Cardiac septum (tissue), 1 donor: ENCODE measurements at regions of chr4 and their contacts with region 1.

Region 1: DNA sequence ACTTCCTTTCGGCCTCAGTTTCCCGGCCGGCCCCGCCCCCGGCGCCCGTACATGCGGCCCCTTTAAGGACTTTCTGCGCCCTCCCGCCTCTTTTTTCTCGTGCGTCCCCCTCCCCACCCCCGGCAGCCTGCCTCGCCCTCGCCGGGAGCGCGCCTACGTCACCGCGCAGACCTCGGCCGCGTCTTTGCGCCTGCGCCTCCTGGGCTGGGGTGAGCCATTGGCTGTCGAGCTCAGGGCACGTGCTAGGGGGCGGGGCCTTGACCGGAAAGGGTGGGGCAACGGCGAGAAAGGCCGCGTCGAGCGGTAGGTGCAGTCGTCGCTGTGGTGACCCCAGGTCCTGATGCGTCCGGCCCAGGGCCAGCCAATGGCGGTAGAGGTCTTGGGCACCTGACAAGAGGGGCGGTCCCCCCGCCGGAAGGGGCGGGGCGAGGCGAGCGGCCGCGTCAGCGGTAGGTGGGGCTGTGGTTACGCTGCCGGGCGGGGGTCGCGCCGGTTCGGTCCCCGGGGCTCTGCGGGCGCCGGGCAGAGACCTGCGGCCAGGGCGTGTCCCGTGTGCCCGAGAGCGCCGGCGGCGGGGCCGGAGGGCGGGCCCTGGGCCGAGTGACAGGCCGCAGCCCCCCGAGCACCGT is at the start of gene UVSSA:
- DNase-seq: peak; percentile 100
- total RNA-seq, gene UVSSA: 10.4 TPM

Region 2: DNA sequence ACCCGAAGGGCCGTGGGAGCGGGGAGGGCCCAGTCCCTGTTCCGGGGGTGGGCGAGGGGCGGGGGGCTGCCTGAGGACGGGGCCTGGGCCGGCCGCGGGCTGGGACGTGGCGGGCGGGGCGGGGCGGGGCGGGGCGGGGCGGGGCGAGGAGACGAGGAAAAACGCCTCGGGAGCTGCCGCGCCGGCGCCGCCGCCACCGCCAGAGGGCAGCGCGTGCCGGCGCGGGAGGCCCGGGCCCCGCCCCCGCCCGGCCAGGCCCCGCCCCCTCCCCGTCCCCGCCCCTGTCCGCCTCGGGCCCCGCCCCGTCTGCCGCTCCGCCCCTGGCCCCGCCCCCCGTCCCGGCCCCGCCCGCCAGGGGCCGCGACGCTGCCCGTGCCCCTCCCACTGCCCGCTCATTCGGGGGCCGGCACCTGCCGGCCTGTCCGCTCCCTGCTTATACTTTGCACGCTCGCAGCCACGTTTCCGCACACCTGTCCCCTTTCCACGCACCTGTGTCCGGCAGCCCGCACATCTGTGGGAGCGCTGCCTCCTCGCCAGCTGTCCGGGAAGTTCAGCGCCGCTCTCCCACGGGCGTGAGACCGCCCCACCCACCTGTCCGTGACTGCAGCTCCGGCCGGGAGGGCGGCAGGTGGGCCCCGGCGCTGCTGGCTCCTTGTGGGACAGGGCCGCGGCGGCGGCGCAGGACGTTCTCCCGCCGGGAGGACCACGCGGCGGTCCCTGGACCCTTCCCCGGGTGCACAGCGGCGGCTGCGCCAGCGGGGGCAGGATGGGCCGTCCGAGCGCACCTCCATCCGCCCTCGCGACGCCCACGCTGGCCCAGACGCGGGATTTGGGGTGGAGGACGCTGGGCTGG is 337.1 kb before region 1 on chr4:
- intact Hi-C with region 1: loop called (anchors 5 kb)
- DNase-seq: peak; percentile 87

Region 3: GRCh38 chr4:1249148-1249730 is 97.7 kb before region 1 on chr4:
- intact Hi-C with region 1: loop called (anchors 1 kb)
- DNase-seq: peak; percentile 92

Region 4: DNA sequence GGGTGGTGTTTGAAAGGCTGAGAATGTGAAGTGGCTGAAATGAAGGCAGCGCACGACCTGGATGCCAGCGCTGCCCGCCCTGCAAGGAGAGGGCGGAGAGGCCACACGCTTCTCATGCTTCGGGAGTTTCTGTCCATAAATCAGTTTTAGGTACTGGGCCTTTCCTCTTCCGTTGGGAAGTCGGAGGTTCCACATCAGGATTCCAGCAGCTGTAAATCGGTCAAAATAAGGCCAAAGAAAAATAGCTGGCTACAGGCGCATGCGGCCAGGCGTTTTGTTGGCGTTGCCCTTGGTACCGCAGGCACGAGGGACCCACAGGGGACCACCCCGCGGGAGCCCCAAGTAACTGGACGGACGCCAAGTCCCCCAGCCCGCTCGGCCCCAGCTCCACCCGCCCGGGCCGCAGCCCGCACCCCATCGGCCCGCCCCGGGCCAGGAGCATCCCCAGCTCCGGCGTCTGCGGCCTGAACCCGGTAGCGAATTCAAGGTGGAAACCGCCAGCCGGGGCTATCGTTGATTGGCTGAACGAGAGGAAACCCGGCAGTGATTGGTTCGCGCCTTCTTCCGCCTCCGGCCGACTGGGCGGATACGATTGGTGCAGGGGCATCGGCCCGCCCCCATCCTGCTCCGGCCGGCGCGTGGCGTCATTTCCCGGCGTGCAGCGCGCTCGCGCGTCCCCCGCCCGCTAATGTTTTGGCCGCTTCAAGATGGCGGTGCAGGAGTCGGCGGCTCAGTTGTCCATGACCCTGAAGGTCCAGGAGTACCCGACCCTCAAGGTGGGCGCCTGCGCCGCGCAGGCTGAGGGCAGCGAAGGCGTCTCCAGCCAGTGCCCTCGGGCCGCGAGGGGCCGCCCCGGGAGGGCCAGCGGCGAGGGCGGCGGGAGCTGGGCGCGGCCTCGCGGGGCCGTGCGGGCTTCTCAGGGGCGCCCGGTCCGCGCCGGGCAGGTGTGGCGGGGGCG is 57.4 kb before region 1 on chr4 and contains the start of gene MAEA:
- intact Hi-C with region 1: loop called (anchors 2 kb)
- DNase-seq: peak; percentile 99
- total RNA-seq, gene MAEA: 55.2 TPM

Region 5: DNA sequence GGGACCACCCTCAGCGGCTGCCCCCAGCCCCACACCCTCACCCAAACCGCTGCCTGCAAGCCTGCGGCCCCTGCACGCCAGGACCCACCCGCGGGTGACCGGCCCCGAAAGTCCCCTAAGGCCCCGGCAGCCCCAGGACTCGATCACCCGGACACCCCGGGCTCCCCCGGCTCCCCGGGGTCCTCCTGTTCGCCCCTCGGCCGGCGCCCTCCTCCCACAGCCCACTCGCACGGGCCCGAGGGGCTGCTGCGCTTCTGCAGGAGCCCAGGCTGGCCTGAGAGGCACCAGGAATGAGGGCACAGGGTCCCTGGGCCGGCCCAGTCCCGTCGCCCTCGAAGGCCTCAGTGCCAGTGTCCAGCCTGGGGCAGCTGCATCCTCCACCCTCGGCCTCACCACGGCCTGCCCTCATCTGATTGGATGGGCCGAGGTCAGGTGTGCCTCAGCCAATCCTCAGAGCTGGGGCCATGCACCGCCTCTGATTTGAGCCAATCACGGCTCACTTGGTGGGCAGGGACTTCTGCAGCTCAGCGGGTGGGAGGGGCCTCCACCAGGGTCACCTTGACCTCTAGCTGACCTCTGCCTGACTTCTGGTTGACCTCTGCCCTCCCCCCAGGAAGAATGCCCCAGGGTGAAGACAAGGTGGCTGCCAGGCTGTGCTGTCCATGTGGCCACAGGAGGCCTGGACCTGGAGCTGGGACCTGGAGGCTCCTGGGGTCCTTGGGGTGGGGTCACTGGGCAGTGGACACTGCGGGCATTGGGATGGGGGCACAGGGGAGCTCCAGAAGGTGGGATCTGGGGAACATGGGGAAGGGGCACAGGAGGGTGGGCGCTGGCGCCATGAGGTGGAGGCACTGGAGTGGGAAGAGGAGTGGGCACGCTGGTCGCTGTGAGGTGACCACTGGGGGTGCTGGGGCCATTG is 156.9 kb after region 1 on chr4:
- intact Hi-C with region 1: no loop called
- DNase-seq: peak; percentile 55

Region 6: DNA sequence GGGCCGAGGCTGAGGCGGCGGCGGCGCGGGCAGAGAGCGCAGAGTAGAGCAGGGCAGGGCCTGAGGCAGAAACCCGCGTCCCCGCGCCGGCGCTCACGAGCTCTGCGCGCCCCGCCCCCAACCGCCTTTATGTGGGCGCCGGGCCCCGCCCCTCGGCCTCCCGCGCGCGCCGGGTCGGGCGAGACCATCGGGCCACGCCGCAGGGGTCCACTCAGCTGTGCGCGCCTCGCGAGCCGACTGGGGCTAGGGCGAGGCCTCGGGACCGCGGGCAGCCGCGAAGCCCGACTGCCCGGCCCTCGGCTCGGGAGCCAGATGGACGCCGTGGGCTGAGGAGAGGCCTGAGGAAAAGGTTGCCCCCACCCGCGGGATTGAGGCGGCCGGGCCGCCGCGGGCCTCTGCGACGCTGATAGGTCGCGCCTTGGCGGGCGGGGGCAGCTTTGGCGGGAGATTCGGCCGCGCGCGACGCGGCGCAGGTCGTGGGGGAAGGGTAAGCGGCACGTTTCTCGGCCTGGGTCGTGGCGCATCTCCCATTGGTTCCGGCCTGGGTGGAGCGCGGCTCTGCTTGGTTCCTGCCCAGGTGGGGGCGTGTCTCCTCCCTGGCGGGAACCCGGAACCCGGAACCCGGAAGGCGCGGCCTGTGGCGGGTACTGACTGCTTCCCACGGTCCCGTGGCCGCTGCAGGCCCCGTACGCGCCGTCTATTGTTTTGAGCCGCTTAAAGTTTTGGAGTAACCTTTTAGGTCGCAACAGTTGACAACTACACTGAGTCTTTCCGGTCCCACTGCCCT is 365.5 kb after region 1 on chr4 and contains the start of gene SLBP:
- intact Hi-C with region 1: loop called (anchors 5 kb)
- DNase-seq: peak; percentile 98
- total RNA-seq, gene SLBP: 12.1 TPM